Heart right ventricle (tissue), 16 donors: ENCODE measurements at regions of chr1 and their contacts with region 1.

Region 1: GRCh38 chr1:202315576-202316168 is 26.1 kb downstream of the UBE2T start:
- DNase-seq: peak; percentile 61 to 70
- ATAC-seq: peak in 7 of 8 donors; percentile 57 to 87 (median 78)
- H3K4me3 ChIP-seq: no peak overlapping the region
- H3K27ac ChIP-seq: no peak overlapping the region
- H3K4me1 ChIP-seq: peaks cover 0 to 12% (median 5%) of the 10 kb centered on the region in 9 donors
- H3K27me3 ChIP-seq: peaks cover 0 to 18% (median 0%) of the 10 kb centered on the region in 7 donors
- CTCF ChIP-seq: peak; percentile 75 to 96 (median 89)

Region 2: GRCh38 chr1:202184750-202185460 is 130.8 kb before region 1 on chr1:
- intact Hi-C with region 1: loop called in 6 of 10 experiments (anchors 2 to 5 kb)
- DNase-seq: peak; percentile 65 to 80
- ATAC-seq: peak; percentile 37 to 78 (median 72)
- H3K4me3 ChIP-seq: no peak overlapping the region
- H3K27ac ChIP-seq: no peak overlapping the region
- H3K4me1 ChIP-seq: peaks cover 0 to 6% (median 0%) of the 10 kb centered on the region in 9 donors
- H3K27me3 ChIP-seq: peaks cover 0 to 27% (median 6%) of the 10 kb centered on the region in 7 donors
- CTCF ChIP-seq: peak; percentile 57 to 84 (median 80)

Region 3: DNA sequence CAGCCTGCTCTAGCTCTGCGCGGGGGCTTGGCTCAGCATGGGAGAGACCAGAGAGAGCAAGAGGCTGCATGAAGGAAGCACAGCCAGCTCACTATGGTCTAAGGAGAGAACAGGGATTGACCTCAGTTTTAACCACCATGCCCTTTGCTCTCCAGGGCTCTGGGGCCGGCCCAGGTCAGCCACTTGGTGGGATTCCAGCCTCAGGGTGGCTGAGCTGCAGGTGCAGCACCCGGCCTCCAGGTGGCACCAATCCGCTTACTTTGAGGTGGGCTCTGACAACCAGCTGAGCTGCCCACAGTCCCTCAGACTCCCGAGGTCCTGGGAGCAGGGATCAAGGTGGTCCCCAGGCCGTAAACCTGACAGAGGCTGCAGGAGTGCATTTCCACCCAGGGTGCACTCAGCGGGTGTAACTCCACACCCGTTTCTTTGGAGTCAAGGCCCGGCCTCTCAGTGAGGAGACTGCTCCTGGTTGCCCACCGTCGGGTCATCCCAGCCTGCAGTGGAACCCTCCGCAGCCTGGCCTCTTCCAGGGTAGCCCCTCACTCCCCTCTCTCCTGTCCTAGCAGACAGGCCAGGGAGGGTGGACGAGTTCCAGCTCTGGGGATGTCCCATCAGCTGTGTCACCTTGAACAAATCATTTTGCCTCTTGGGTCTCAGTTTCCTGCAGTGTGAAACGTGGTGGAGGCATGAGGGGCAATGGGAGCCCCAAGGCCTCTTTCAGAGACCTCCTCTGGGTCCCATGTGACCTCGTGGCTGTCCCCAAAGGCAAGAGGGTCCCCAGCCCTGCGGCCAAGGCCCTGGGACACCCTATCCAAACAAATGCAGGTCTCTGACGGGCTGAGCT is 122.7 kb before region 1 on chr1:
- intact Hi-C with region 1: loop called (anchors 2 to 5 kb)
- DNase-seq: peak; percentile 40 to 62
- ATAC-seq: peak; percentile 64 to 79 (median 73)
- H3K4me3 ChIP-seq: peak overlapping the region in 7 of 10 donors; percentile 16 to 40 (median 26)
- H3K27ac ChIP-seq: no peak overlapping the region
- H3K4me1 ChIP-seq: peaks cover 0 to 11% (median 6%) of the 10 kb centered on the region in 9 donors
- H3K27me3 ChIP-seq: peaks cover 0 to 34% (median 24%) of the 10 kb centered on the region in 7 donors
- CTCF ChIP-seq: peak; percentile 66 to 90 (median 85)

Region 4: GRCh38 chr1:202274611-202275010 is 41.1 kb before region 1 on chr1:
- intact Hi-C with region 1: loop called in 5 of 10 experiments (anchors 2 to 5 kb)
- DNase-seq: peak in 1 of 2 donors; percentile 17
- ATAC-seq: peak in 2 of 8 donors; percentile 26 to 42
- H3K4me3 ChIP-seq: no peak overlapping the region
- H3K27ac ChIP-seq: no peak overlapping the region
- H3K4me1 ChIP-seq: no peaks in the 10 kb centered on the region
- H3K27me3 ChIP-seq: peaks cover 0 to 14% (median 4%) of the 10 kb centered on the region in 7 donors
- CTCF ChIP-seq: peak in 7 of 9 donors; percentile 32 to 56 (median 53)

Region 5: DNA sequence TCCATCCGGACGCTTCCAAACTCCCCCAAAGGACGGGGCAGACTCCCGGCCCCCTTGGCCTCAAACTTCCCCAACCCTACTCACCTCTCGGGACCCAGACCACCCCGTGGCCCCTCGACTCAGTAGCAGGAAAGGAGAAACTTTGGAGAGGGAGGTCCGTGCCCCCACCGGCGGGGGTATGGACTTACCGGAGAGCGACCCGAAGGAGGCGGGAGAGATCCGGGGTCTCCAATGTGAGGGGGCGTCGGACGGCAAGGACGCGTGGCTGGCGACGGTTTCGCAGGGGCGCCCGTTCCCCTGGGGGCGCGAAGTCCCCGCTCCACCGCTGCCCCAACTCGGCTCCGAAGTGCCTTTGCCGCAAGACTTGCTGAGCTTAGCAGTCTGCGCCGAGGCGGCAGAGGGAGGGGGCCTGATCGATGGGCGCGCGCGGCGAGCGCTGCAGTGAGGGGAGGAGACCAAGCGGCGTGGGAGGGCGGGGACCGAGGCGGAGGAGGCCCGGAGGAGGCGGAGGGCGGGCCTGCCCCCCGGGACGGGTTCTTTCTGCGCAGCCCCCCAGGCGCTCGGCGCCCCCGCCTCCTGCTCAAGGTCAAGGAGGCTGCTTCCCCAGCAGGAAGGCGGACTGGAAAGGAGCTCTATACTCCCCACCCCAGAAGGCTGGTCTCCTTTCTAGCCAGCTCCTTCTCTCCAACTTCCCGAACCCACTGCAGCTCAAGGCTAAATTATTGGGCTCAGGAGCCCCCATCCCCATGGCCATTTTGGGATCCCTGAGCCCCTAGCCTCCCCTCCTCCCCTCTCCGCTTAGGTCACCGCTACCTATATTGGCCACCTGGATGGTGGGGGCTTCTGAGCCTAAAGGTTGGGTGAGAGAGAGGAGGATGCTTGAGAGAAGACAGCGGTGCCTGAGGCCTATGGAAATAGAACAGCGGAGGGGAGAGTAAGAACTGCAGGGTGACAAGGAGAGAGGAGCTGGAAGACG is 394.7 kb after region 1 on chr1 and contains the start of gene SYT2:
- intact Hi-C with region 1: loop called in 2 of 10 experiments (anchors 10 kb)
- DNase-seq: no peak
- ATAC-seq: peak in 6 of 8 donors; percentile 30 to 65 (median 50)
- H3K4me3 ChIP-seq: peak within 1 kb of the TSS; percentile 11 to 45 (median 34)
- H3K27ac ChIP-seq: no peak within 1 kb of the TSS
- H3K4me1 ChIP-seq: peaks cover 0 to 19% (median 15%) of the 10 kb centered on the region in 9 donors
- H3K27me3 ChIP-seq: peaks cover 7 to 98% (median 65%) of the 10 kb centered on the region in 7 donors
- CTCF ChIP-seq: no peak
- total RNA-seq, gene SYT2: 0.02 TPM in 1 of 10 donors, not detected in the others